Left colon (tissue), 2 donors: ENCODE measurements at regions of chr3 and their contacts with region 1.

Region 1: DNA sequence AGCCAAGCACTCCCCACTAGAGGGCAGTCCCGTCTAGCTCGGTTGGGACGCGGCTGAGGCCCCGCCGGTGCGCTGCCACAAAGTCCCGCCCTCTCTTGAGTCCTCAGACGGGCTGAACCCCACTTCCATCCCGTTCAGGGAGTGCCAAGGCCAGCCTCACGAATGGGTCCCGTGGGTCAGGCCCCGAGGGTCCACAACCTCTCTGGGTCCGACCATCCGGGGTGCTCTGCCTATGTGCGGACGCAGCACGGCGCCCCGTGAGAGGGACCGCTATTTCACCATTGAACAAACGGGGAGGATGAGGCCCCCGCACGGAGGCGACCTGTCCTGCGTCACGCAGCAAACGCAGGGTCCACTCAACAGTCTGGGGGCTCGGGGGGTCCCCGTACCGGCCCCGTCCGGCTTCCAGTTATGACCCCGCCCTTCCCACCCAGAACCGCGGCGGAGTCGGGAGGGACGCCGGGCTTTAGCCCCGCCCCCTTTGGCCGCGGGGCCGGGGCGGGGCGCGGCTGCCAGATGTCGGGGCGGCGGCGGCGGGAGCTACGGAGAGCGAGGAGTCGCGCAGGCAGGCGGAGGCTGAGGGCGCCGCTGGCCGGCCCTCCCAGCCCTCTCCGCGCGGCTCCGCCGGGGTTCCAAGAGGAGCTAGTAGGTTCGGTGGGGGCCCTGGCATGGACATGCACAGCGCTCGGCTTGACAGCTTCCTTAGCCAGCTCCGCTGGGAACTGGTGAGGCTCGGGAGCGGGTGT is at the start of gene INKA1:
- DNase-seq: peak; percentile 90 to 95
- ATAC-seq: peak; percentile 88
- total RNA-seq, gene INKA1: 0.27 to 2.0 TPM

Region 2: DNA sequence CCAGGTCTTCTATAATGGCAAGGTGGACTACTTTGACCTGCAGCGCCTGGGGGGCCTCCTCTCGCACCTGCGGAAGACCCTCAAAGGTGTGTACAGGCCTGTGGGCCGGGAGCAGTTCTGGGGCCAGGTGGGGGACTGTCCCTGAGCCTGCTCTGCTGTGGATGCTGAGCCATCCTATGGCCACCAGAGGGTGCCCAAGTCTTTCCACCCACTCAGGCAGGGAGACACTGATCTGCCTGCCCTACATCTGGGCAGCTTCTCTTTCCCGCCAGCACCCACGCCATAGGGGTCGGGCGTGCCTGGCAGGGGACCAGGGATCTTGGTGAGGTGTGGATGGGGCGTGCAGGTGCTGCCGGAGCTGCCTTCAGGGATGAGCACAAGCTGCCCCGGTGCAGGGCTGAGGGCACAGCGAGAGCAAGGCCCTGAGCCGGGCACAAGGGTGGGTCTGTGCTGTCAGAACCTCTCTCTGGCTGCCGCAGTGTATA is 99.4 kb before region 1 on chr3:
- intact Hi-C with region 1: no loop called
- DNase-seq: peak; percentile 54 to 62
- ATAC-seq: peak; percentile 92

Region 3: DNA sequence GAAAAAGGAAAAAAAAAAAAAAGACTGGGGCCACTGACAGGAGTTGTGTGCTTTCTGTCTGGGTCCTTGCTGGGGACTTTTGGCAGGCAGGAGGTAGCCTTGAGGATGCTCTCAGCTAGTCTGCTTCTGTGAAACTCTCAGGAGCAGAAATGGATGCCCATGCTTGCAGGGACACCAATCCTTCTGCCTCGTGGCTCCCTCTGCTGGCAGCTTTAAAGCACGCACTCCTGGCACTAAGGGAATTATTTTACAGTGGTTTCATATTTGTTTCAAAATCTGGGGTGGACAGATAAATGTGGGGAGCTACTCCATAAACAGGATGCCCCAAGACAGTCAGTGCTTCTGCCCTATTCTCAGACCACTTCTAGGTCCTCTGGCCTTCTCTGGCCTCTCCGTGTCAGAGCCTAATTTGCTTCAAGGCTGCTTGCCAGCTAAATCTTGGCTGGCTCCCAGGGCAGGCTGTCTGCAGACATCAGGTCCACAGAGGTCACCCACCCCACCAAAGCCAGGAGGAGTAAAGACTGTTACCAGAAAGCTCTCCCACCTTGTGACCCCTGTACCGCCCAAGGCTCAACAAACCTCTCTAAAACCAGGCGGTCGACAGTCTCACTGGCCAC is 36.4 kb after region 1 on chr3:
- intact Hi-C with region 1: loop called in 1 of 2 experiments (anchors 5 kb)
- DNase-seq: peak; percentile 73 to 88
- ATAC-seq: peak; percentile 92

Region 4: GRCh38 chr3:49855662-49856061 is 52.8 kb after region 1 on chr3:
- intact Hi-C with region 1: no loop called
- DNase-seq: no peak
- ATAC-seq: no peak

Region 5: GRCh38 chr3:49906004-49906743 is 103.3 kb after region 1 on chr3:
- intact Hi-C with region 1: loop called in 1 of 2 experiments (anchors 10 kb)
- DNase-seq: peak; percentile 83 to 88
- ATAC-seq: peak; percentile 68